ENCODE measurements at regions of chr1 and their contacts with region 1.

Region 1: GRCh38 chr1:229726061-229726460 is 100.0 kb downstream of the URB2 start:
- DNase-seq: no peak
- H3K4me3 ChIP-seq: no peak overlapping the region
- H3K27ac ChIP-seq: no peak overlapping the region
- H3K4me1 ChIP-seq: no peaks in the 10 kb centered on the region
- H3K27me3 ChIP-seq: no peaks in the 10 kb centered on the region
- CTCF ChIP-seq: no peak
- POLR2A ChIP-seq: no peak

Region 2: DNA sequence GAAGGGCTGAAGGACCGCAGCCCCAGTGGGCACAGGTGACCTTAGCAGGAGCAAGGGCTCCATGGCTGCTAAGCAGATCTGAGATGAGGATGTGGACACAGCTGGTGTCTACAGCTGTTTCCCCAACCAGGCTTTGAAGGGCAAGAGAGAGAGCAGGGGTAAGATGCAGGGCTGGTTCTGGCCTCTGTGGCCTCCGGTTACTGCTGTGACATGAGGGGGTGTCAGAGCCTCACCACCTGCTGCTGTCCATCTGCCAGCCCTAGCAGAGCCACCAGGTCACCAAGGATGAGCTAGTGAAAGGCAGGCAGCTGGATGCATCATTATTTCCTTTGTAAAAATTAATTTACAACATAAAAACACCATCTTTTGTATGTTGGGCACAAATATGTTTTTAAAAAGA is 1484.8 kb before region 1 on chr1:
- intact Hi-C with region 1: loop called (anchors 5 kb)
- DNase-seq: no peak
- H3K4me3 ChIP-seq: no peak overlapping the region
- H3K27ac ChIP-seq: no peak overlapping the region
- H3K4me1 ChIP-seq: no peaks in the 10 kb centered on the region
- H3K27me3 ChIP-seq: no peaks in the 10 kb centered on the region
- CTCF ChIP-seq: no peak
- POLR2A ChIP-seq: no peak

Region 3: GRCh38 chr1:229579059-229579673 is 146.9 kb before region 1 on chr1:
- intact Hi-C with region 1: no loop called
- DNase-seq: peak in 1 of 2 donors; percentile 32
- H3K4me3 ChIP-seq: peak overlapping the region in 2 of 3 donors; percentile 25 to 44
- H3K27ac ChIP-seq: peak overlapping the region; percentile 56 to 67
- H3K4me1 ChIP-seq: peaks cover 0 to 6% of the 10 kb centered on the region in 2 donors
- H3K27me3 ChIP-seq: no peaks in the 10 kb centered on the region
- CTCF ChIP-seq: no peak
- POLR2A ChIP-seq: no peak

Region 4: GRCh38 chr1:229691362-229691761 is 34.7 kb before region 1 on chr1:
- intact Hi-C with region 1: no loop called
- DNase-seq: no peak
- H3K4me3 ChIP-seq: no peak overlapping the region
- H3K27ac ChIP-seq: no peak overlapping the region
- H3K4me1 ChIP-seq: no peaks in the 10 kb centered on the region
- H3K27me3 ChIP-seq: no peaks in the 10 kb centered on the region
- CTCF ChIP-seq: no peak
- POLR2A ChIP-seq: no peak